ENCODE measurements at regions of chr21 and their contacts with region 1.

Region 1: DNA sequence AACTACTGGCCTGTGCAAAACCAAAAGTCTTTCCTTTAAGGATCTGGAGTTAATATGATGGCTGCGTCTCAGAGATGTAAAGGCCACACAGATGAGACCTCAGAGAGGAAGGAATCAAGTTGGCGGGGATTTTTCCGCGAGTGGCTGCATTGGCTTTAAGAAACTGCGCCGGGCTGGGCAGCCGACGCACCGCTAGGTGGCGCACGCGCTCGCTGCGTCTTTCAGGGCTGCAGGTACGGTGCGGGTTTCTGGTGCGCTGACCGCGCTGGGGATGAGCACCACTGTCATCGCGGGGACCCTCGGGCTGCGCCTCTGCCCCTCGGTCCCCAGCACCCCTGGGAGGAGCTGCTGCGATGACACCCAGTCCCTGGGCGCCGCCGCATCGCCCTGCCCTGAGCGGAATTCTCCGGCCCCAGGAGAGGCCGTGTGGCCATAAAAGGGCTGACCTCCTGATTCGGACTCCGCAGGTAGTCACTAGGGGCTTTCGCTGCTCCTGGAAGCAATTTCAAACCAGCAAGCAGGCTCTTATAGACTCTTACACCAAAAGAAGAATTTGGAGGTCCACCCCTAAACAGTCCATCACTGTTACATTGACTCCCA is 241.0 kb downstream of the KCNJ6 start:
- DNase-seq: no peak
- H3K4me3 ChIP-seq: no peak overlapping the region
- CTCF ChIP-seq: peak; percentile 89

Region 2: GRCh38 chr21:37658817-37659458 is 16.4 kb before region 1 on chr21:
- CTCF ChIA-PET with region 1: interaction called, 52 read pairs
- POLR2A ChIA-PET with region 1: no interaction called
- DNase-seq: peak; percentile 40
- H3K4me3 ChIP-seq: no peak overlapping the region
- CTCF ChIP-seq: no peak

Region 3: DNA sequence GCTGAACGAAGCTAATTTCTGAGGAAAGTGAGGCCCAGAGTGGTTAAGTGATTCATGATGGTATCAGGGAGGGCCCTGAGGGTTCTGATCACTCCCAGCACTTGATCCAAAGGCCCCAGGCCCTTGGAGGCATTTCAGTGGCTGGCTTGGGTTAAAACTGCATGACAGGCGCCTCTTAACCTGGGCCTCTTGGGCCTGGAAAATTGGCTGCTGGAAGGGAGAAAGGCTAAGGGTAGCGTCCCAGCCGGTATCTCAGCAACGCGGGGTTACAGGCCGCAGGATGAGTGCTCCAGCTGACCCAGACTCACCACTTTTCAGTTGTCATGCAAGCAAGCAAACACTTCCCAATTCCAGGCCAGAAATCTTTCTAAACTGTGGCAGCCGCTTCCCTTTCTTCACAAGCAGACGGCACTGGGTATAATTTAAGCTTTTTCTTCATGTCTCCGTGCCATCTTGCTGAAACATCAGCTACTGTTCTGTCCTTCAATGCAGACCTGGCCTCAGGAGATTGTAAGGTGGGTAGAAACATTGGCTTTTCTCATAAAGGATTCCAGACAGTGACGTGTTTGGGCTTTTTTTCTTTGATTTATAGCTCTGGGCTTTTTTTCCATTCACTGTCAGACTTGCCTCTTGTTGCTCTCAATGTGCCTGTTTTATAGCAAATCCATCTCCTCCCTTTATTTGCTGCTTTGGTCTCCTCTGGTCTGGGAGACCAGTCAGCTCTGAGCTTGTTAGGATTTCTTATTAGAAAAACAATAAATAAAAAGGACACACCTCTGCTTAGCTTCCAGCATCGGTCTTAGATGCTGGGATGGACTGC is 11.9 kb after region 1 on chr21:
- CTCF ChIA-PET with region 1: interaction called, 25 read pairs
- POLR2A ChIA-PET with region 1: no interaction called
- DNase-seq: no peak
- H3K4me3 ChIP-seq: no peak overlapping the region
- CTCF ChIP-seq: no peak

Region 4: DNA sequence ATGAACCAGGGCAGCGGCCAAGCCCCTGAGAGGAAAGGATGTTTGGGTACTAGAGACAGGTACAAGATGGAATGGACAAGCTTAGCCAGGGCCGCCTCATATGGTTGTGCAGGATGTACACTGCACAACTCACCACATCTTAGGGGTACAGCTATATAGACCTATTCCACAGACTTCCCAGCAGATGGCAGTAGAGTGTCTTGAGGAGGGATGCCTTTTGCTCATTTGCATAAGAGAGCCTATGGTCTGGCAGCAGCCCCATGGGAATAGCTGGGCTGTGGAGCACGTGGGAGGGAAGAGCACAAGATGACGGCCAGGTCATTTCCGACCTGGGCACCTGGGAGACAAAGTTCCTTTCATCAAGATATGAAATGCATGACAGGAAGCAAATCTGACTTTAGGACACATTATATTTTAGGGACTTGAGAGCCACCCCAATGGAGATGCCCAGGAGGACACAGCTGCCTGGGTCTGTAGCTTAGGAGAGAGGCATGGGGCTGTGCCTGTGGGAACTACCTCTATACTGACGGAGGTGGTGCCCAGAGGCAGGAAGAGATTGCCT is 25.4 kb after region 1 on chr21:
- CTCF ChIA-PET with region 1: interaction called, 35 read pairs
- POLR2A ChIA-PET with region 1: no interaction called
- DNase-seq: peak; percentile 45
- H3K4me3 ChIP-seq: no peak overlapping the region
- CTCF ChIP-seq: peak; percentile 72